AG04449 (cell line): ENCODE measurements at regions of chr10 and their contacts with region 1.

Region 1: DNA sequence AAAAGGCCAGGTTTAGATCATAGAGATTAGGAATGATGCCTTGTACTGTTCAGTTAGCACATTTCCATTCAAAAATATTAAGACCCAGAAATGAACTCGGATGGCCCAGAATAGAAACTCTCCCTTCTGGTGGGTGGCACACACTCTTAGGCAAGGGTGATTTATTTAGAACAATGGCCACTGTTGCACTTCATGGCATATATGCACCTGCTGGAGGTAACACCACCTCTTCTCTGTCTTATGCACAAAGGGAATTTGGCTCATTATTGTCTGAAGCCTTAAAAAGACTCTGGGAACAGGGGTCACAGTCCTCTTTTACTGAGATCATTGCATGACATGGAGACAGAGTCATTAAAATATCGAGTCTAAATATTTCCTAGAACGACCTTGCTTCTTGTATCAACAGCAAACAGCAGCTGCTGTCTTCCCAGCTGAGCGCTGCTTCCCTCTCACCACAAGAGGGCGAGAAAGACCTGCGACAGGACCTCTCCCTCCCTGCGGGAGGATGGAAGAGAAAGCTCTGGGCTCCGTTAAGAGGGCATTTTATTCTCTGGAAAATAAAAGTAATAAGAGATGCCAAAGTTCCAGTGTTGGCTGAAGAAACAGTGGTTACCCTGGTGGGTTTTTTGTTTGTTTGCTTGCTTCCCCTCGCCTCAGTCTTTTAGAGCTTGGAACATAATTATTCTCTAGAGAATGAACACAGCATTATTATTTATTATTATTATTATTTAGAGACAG is 13.6 kb upstream of the BAMBI start:
- DNase-seq: peak; percentile 45
- H3K4me3 ChIP-seq: no peak overlapping the region
- CTCF ChIP-seq: peak; percentile 95

Region 2: DNA sequence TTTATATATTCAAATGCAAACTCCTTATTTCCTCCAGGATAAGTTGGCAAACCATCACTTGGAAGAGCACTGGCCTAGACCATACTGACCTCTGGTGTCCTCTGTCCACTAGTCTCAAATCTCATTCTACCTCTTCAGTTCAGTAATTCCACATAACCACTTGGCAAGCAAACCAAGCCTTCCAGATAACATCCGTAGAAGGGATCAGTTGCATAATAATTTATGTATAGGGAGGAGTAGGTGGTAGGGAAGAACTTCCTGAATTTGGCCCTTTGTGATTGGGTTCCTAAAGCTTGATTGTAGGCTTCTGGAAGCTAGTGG is 75.8 kb before region 1 on chr10:
- CTCF ChIA-PET with region 1: no interaction called
- POLR2A ChIA-PET with region 1: no interaction called
- DNase-seq: no peak
- H3K4me3 ChIP-seq: no peak overlapping the region
- CTCF ChIP-seq: no peak

Region 3: DNA sequence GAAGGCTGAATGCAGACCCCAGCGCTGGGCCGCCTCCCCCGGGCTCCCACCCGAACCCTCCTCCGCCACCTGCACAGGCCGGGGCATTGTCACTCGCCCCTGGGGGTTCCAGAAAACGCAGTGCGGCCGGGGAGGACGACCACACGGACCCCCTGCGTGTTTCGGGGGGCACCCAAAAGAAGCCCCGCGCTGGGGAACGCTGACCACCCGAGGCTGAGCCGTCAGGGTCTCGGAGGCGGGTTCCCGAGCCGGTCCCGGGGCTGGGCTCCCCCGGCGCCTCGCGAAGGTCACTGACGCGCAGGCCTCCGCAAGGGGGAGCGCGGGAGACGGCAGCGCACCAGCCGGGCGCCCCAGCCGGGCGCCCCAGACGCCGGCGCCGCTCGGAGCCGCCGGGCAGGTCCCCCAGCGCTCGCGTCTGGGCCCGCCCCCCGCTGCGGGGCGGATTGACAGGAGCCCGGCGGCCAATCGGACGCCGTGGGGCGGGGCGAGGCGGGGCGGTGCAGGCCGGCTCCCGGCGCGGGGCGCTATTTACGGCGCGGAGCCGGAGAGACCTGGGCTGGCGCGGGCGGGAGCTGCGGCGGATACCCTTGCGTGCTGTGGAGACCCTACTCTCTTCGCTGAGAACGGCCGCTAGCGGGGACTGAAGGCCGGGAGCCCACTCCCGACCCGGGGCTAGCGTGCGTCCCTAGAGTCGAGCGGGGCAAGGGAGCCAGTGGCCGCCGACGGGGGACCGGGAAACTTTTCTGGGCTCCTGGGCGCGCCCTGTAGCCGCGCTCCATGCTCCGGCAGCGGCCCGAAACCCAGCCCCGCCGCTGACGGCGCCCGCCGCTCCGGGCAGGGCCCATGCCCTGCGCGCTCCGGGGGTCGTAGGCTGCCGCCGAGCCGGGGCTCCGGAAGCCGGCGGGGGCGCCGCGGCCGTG is 13.5 kb after region 1 on chr10 and contains the start of gene BAMBI:
- CTCF ChIA-PET with region 1: interaction called, 40 read pairs
- POLR2A ChIA-PET with region 1: no interaction called
- DNase-seq: no peak
- H3K4me3 ChIP-seq: peak within 1 kb of the TSS; percentile 81
- CTCF ChIP-seq: peak; percentile 79

Region 4: GRCh38 chr10:29131952-29132820 is 468.4 kb after region 1 on chr10:
- CTCF ChIA-PET with region 1: interaction called, 80 read pairs
- POLR2A ChIA-PET with region 1: no interaction called
- DNase-seq: no peak
- H3K4me3 ChIP-seq: no peak overlapping the region
- CTCF ChIP-seq: no peak

Region 5: DNA sequence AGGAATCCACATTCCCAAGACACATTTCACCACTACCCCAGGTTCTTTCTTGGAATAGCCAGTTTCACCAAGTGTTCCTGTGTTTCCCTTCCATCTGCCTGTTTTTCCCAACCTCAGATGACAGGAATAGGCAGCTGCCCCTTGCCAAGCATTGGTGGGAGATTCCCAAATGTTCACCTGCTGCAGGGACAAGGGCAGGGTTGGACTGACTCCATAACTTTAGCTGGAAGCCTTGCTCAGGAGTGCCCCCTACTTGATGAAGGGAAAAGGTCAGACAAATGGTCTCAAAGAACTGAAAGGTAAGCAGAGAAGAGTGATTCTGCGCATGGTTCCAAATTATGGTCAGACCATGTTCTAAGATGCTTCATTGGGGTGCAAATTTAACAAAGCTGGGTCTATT is 580.0 kb after region 1 on chr10:
- CTCF ChIA-PET with region 1: interaction called, 19 read pairs
- POLR2A ChIA-PET with region 1: no interaction called
- DNase-seq: no peak
- H3K4me3 ChIP-seq: no peak overlapping the region
- CTCF ChIP-seq: peak; percentile 22

Region 6: DNA sequence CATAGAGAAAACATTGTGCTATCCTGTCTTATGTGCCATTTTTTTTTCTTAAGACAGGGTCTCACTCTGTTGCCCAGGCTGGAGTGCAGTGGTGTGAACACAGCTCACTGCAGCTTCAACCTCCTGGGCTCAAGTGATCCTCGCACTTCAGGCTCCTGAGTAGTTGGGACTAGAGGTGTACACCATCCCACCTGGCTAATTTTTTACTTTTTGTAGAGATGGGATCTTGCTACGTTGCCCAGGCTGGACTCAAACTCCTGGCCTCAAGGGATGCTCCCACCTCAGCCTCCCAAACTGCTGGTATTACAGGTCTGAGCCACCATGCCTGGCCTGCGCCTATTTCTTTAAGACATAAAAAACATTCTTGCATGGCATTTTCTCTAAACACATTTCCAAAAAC is 645.7 kb after region 1 on chr10:
- CTCF ChIA-PET with region 1: interaction called, 110 read pairs
- POLR2A ChIA-PET with region 1: no interaction called
- DNase-seq: no peak
- H3K4me3 ChIP-seq: no peak overlapping the region
- CTCF ChIP-seq: no peak